Endothelial cell of umbilical vein (primary cell): ENCODE measurements at regions of chr5 and their contacts with region 1.

Region 1: GRCh38 chr5:113606298-113607134 is 93.0 kb downstream of the YTHDC2 start:
- DNase-seq: peak; percentile 82
- H3K4me3 ChIP-seq: peak overlapping the region in 2 of 3 experiments; percentile 23 to 60
- H3K27ac ChIP-seq: no peak overlapping the region
- H3K4me1 ChIP-seq: peaks cover 8% of the 10 kb centered on the region
- H3K27me3 ChIP-seq: no peaks in the 10 kb centered on the region
- CTCF ChIP-seq: peak; percentile 62 to 65
- POLR2A ChIP-seq: no peak

Region 2: GRCh38 chr5:112511920-112512319 is 1094.6 kb before region 1 on chr5:
- CTCF ChIA-PET with region 1: no interaction called
- POLR2A ChIA-PET with region 1: no interaction called
- dilution Hi-C with region 1: no loop called
- intact Hi-C with region 1: no loop called
- DNase-seq: no peak
- H3K4me3 ChIP-seq: no peak overlapping the region
- H3K27ac ChIP-seq: no peak overlapping the region
- H3K4me1 ChIP-seq: no peaks in the 10 kb centered on the region
- H3K27me3 ChIP-seq: peaks cover 0 to 2% of the 10 kb centered on the region in 2 experiments
- CTCF ChIP-seq: no peak
- POLR2A ChIP-seq: no peak

Region 3: GRCh38 chr5:112551419-112552032 is 1055.0 kb before region 1 on chr5:
- CTCF ChIA-PET with region 1: interaction called, 8 read pairs
- POLR2A ChIA-PET with region 1: no interaction called
- dilution Hi-C with region 1: no loop called
- intact Hi-C with region 1: loop called (anchors 1 kb)
- DNase-seq: peak; percentile 67
- H3K4me3 ChIP-seq: no peak overlapping the region
- H3K27ac ChIP-seq: no peak overlapping the region
- H3K4me1 ChIP-seq: no peaks in the 10 kb centered on the region
- H3K27me3 ChIP-seq: peaks cover 0 to 4% of the 10 kb centered on the region in 2 experiments
- CTCF ChIP-seq: peak; percentile 42 to 58
- POLR2A ChIP-seq: no peak

Region 4: GRCh38 chr5:112691758-112692157 is 914.8 kb before region 1 on chr5:
- CTCF ChIA-PET with region 1: interaction called, 5 read pairs
- POLR2A ChIA-PET with region 1: no interaction called
- dilution Hi-C with region 1: no loop called
- intact Hi-C with region 1: loop called (anchors 1 kb)
- DNase-seq: peak; percentile 43
- H3K4me3 ChIP-seq: no peak overlapping the region
- H3K27ac ChIP-seq: no peak overlapping the region
- H3K4me1 ChIP-seq: no peaks in the 10 kb centered on the region
- H3K27me3 ChIP-seq: peaks cover 10 to 12% of the 10 kb centered on the region in 2 experiments
- CTCF ChIP-seq: peak; percentile 33 to 41
- POLR2A ChIP-seq: no peak

Region 5: DNA sequence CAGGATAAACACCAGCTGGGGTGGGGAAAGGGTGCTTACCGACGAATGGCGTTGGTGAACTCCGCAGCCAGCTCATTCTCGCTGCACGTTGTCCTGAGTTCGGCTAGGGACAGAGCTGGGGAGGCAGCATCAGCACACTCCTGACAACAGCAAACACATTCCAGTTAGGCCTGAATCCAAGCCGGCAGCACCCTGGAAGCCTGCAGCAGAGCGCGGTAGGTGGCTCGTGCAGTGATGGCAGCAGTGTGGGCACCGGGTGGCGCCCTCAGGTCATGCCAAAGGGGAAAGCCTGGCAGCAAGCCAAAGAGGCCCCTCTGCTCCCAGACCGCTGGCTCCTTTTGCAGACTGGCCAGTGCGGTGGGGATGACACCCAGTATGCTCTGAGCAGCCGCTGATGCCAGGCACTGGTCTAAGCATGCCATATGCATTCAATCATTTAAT is 563.0 kb before region 1 on chr5:
- CTCF ChIA-PET with region 1: interaction called, 4 read pairs
- POLR2A ChIA-PET with region 1: no interaction called
- dilution Hi-C with region 1: no loop called
- intact Hi-C with region 1: loop called (anchors 1 kb)
- DNase-seq: peak; percentile 17
- H3K4me3 ChIP-seq: no peak overlapping the region
- H3K27ac ChIP-seq: no peak overlapping the region
- H3K4me1 ChIP-seq: peaks cover 4% of the 10 kb centered on the region
- H3K27me3 ChIP-seq: no peaks in the 10 kb centered on the region
- CTCF ChIP-seq: peak; percentile 19 to 20
- POLR2A ChIP-seq: no peak

Region 6: GRCh38 chr5:113123618-113124017 is 482.9 kb before region 1 on chr5:
- CTCF ChIA-PET with region 1: interaction called, 4 read pairs
- POLR2A ChIA-PET with region 1: no interaction called
- dilution Hi-C with region 1: no loop called
- intact Hi-C with region 1: loop called (anchors 1 kb)
- DNase-seq: peak; percentile 22
- H3K4me3 ChIP-seq: no peak overlapping the region
- H3K27ac ChIP-seq: no peak overlapping the region
- H3K4me1 ChIP-seq: no peaks in the 10 kb centered on the region
- H3K27me3 ChIP-seq: no peaks in the 10 kb centered on the region
- CTCF ChIP-seq: peak; percentile 25 to 28
- POLR2A ChIP-seq: no peak

Region 7: DNA sequence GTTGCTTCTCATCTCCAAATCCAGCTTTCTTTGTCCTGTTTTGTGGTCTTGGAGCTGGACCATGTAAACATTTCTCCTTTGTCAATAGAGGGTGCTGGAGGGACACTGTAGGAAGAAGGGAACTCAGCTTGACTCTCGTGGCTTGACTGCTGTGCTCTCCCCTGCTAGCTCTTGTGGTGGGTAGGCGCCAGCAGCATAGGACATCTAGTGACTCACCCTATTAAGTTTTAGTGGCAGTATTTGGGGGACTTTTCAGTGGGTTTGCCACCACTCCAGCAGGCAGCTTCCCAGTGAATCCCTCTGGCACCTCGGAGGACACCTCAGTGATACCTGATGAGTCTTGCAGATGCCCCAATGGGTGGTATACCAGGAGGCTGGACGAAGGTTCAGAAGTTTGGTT is 269.5 kb before region 1 on chr5:
- CTCF ChIA-PET with region 1: interaction called, 179 read pairs
- POLR2A ChIA-PET with region 1: no interaction called
- dilution Hi-C with region 1: no loop called
- intact Hi-C with region 1: loop called (anchors 1 kb)
- DNase-seq: peak; percentile 78
- H3K4me3 ChIP-seq: no peak overlapping the region
- H3K27ac ChIP-seq: no peak overlapping the region
- H3K4me1 ChIP-seq: peaks cover 8% of the 10 kb centered on the region
- H3K27me3 ChIP-seq: no peaks in the 10 kb centered on the region
- CTCF ChIP-seq: peak; percentile 51 to 59
- POLR2A ChIP-seq: no peak

Region 8: GRCh38 chr5:113378959-113379541 is 227.5 kb before region 1 on chr5:
- CTCF ChIA-PET with region 1: interaction called, 13 read pairs
- POLR2A ChIA-PET with region 1: no interaction called
- dilution Hi-C with region 1: no loop called
- intact Hi-C with region 1: loop called (anchors 1 kb)
- DNase-seq: peak; percentile 84
- H3K4me3 ChIP-seq: no peak overlapping the region
- H3K27ac ChIP-seq: no peak overlapping the region
- H3K4me1 ChIP-seq: peaks cover 28% of the 10 kb centered on the region
- H3K27me3 ChIP-seq: no peaks in the 10 kb centered on the region
- CTCF ChIP-seq: peak; percentile 67 to 76
- POLR2A ChIP-seq: no peak